ENCODE measurements at regions of chr14 and their contacts with region 1.

Region 1: GRCh38 chr14:51979088-51979709 is 10.1 kb upstream of the RTRAF start:
- DNase-seq: peak; percentile 55
- H3K4me3 ChIP-seq: no peak overlapping the region
- H3K27ac ChIP-seq: no peak overlapping the region
- H3K27me3 ChIP-seq: peaks cover 2% of the 10 kb centered on the region
- CTCF ChIP-seq: peak; percentile 89

Region 2: DNA sequence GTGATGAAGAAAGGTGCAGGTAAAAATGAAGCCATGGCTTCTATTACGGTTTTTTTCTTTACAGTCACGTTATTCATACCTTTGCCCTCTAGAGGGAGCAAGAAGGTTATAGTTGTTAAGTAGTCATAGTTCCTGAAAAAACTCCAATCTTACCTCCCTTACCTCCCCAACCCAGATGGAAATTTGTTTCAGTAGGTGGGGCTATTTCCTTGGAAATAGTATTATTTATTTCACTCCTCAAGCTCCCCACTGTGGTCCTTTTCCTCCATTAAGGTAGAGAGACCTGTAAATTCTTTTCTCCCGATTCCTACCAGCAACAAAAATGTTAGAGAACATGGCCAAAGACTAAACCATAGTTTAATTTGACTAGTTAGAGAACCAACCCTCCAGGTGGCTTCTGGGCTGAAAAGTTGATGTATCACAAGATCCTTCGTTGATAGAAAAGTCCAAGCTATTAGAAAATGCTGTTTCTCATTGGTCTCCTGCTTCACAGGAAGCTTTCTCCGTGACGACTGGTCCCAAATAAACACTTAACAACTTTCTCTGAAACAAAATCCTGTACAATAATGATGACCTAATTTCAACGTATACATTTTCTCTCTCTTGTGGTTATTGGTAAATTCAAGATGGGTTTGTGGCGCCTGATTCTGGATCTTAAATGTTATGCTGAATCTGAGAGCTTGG is 695.7 kb before region 1 on chr14:
- CTCF ChIA-PET with region 1: interaction called, 16 read pairs
- POLR2A ChIA-PET with region 1: no interaction called
- DNase-seq: peak; percentile 83
- H3K4me3 ChIP-seq: no peak overlapping the region
- H3K27ac ChIP-seq: no peak overlapping the region
- H3K27me3 ChIP-seq: no peaks in the 10 kb centered on the region
- CTCF ChIP-seq: peak; percentile 79

Region 3: DNA sequence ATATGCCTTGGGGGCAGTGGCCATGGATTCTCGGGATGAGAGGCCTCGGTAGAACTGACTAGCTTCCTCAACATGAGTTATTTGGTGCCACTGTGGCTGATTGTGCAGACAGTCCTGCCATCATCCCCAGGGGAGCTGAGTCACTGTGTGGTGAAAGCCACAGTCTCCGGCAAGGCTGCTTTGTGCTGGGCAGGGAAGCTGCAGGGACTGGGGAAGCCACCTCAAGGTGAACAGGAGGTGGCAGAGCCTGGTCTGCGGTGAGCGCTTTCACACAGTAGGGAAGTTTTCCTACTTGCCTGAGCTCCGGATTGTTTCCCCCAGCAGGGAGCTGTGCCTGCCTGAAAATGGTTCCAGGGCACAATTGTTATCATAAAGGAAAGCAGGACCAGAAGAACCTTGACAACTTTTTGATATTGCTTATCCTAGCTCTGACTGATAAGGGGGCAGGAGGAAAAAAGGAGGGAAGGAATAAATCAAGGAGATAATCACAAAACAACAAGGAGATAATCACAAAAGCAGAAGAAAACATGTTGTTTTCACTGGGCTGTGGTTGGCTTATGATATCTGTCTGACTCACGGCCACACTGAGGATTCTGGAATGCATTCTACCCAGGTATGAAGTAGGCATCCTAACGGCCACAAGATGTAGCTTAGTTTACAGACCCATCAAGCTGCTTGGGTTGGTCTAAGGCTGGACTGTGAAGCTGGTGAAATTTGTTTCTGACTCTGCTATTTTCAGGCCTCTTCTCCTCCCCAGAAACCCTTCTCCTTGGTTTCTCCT is 151.0 kb before region 1 on chr14:
- CTCF ChIA-PET with region 1: interaction called, 14 read pairs
- POLR2A ChIA-PET with region 1: no interaction called
- DNase-seq: no peak
- H3K4me3 ChIP-seq: no peak overlapping the region
- H3K27ac ChIP-seq: no peak overlapping the region
- H3K27me3 ChIP-seq: no peaks in the 10 kb centered on the region
- CTCF ChIP-seq: no peak

Region 4: GRCh38 chr14:51967521-51967920 is 11.7 kb before region 1 on chr14:
- CTCF ChIA-PET with region 1: interaction called, 52 read pairs
- POLR2A ChIA-PET with region 1: no interaction called
- DNase-seq: no peak
- H3K4me3 ChIP-seq: no peak overlapping the region
- H3K27ac ChIP-seq: no peak overlapping the region
- H3K27me3 ChIP-seq: peaks cover 3% of the 10 kb centered on the region
- CTCF ChIP-seq: no peak

Region 5: GRCh38 chr14:52124791-52125661 is 145.8 kb after region 1 on chr14:
- CTCF ChIA-PET with region 1: interaction called, 10 read pairs
- POLR2A ChIA-PET with region 1: no interaction called
- DNase-seq: no peak
- H3K4me3 ChIP-seq: no peak overlapping the region
- H3K27ac ChIP-seq: peak overlapping the region; percentile 80
- H3K27me3 ChIP-seq: no peaks in the 10 kb centered on the region
- CTCF ChIP-seq: no peak

Measured in AG04450 (cell line).